Activated CD4-positive, alpha-beta T cell treated with anti-CD3 and anti-CD28 coated beads for 36 hours (primary cell): ENCODE measurements at regions of chr12 and their contacts with region 1.

Region 1: DNA sequence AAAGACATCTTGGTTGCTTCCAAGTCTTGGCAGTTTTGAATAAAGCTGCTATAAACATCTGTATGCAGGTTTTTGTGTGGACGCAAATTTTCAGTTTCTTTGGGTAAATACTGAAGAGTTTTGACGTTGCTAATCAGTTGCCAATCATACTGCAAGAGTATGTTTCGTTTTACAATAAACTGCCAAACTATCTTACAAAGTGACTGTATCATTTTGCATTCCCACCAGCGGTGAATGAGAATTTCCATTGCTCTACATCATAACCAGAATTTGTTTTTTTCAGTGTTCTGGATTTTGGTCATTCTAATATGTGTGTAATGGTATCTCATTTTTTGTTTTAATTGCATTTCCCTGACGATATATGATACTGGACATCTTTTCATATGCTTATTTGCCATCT is 190.8 kb upstream of the PARP11 start:
- DNase-seq: no peak
- ATAC-seq: peak; percentile 70
- H3K4me3 Mint-ChIP-seq: no peak overlapping the region
- H3K27ac Mint-ChIP-seq: peak overlapping the region; percentile 64
- H3K4me1 Mint-ChIP-seq: peaks cover 22% of the 10 kb centered on the region
- H3K27me3 Mint-ChIP-seq: no peaks in the 10 kb centered on the region

Region 2: GRCh38 chr12:4037747-4038312 is 26.2 kb before region 1 on chr12:
- CTCF ChIA-PET with region 1: no interaction called
- POLR2A ChIA-PET with region 1: no interaction called
- intact Hi-C with region 1: loop called in 1 of 2 experiments (anchors 2 kb)
- DNase-seq: peak; percentile 35
- ATAC-seq: no peak
- H3K4me3 Mint-ChIP-seq: no peak overlapping the region
- H3K27ac Mint-ChIP-seq: no peak overlapping the region
- H3K4me1 Mint-ChIP-seq: peaks cover 5% of the 10 kb centered on the region
- H3K27me3 Mint-ChIP-seq: no peaks in the 10 kb centered on the region

Region 3: GRCh38 chr12:4153343-4153892 is 89.4 kb after region 1 on chr12:
- CTCF ChIA-PET with region 1: no interaction called
- POLR2A ChIA-PET with region 1: no interaction called
- intact Hi-C with region 1: no loop called
- DNase-seq: peak; percentile 85
- ATAC-seq: peak; percentile 83
- H3K4me3 Mint-ChIP-seq: peak overlapping the region; percentile 21
- H3K27ac Mint-ChIP-seq: peak overlapping the region; percentile 95
- H3K4me1 Mint-ChIP-seq: peaks cover 74% of the 10 kb centered on the region
- H3K27me3 Mint-ChIP-seq: no peaks in the 10 kb centered on the region